ENCODE measurements at regions of chr1 and their contacts with region 1.

Region 1: DNA sequence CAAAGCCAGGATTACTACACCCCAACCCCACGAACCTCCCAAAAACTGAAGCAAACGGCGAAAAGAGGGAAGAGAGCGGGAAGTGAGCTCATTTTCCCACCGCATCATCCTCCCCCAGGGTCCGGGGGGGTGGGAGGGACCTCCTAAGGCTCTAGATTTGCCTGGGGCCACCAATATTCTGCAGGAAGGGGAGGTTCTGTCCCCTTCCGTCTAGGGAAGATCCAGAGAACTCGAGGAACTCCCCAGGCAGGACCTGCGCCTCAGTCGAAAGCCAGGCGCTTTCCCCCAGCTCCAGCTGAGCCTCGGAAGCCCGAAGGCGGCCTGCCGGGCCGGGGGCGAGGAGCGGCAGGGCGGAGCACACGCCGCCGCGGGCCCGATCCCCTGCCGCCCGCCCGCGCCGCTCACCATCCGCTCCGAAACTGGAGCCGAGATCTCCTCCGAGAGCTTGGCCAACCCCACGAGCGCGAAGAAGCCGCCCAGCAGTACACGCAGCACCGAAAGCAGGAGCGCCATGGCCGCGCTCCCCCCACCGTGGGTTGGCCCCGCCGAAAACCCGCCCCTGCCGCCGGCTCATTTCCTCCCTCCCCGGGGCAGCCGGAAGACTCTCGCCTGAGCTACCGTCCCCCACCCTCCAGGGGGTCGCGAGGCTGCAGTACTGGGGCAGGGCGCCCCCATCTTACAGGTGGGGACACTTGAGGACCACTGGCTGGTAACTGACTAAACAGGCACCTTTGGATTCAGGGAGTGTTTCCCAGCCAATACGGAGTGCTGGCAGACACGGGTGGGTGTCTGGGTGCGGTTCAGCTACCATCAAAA is at the start of gene TMEM35B:
- DNase-seq: peak in 1 of 2 donors; percentile 81
- H3K4me3 ChIP-seq: peak within 1 kb of the TSS; percentile 70 to 92
- H3K27ac ChIP-seq: peak within 1 kb of the TSS; percentile 95 to 96
- H3K4me1 ChIP-seq: peaks cover 8 to 15% of the 10 kb centered on the region in 2 donors
- H3K27me3 ChIP-seq: no peaks in the 10 kb centered on the region
- CTCF ChIP-seq: peak in 1 of 3 experiments; percentile 5
- total RNA-seq, gene TMEM35B: 16.1 TPM

Region 2: GRCh38 chr1:34946211-34946610 is 38.8 kb before region 1 on chr1:
- intact Hi-C with region 1: no loop called
- DNase-seq: no peak
- H3K4me3 ChIP-seq: no peak overlapping the region
- H3K27ac ChIP-seq: no peak overlapping the region
- H3K4me1 ChIP-seq: no peaks in the 10 kb centered on the region
- H3K27me3 ChIP-seq: no peaks in the 10 kb centered on the region
- CTCF ChIP-seq: no peak

Region 3: DNA sequence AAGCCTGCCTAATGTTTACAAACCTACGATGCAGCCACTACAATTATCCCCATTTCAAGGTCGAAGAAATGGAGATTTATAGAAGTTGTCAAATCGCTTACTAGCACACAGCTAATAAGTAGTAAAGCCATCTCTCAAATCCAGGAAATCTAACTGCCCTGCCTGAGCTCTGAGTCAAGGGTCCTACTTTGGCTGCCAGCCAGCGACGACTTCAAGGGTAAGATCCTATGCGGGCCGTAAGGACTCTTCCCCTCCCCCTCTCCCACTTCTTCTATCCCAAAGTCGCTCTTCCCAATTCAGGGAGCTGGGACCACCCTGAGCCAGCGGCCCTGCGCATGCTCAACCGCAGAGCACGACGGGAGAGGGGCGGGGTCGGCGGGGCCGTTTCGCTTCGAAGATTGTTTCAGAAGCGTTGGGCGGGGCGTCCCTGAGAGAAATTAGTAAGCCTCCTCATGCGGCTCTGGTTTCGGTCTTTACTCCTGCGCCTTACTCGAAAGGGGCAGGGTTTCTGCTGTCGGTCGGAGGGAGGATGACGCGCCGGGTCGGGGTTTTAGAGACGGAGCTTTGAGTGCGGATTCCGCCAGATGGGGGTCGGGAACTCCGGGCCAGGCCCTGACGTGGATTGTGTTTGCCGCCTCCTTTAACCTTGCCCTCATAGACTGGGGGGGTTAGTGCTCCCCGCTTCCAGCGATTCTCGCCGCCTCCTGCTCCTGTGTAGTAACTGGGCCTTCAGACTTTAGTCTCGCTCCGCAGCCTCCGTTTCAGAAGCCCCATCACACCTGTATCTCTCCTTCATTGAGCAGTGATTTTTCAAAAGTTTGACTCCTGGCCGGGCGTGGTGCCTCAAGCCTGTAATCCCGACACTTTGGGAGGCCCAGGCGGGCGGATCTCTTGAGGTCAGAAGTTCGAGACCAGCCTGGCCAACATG is 94.3 kb after region 1 on chr1 and contains the start of gene ZMYM1:
- intact Hi-C with region 1: loop called (anchors 1 kb)
- DNase-seq: peak; percentile 19 to 89
- H3K4me3 ChIP-seq: peak within 1 kb of the TSS; percentile 74 to 77
- H3K27ac ChIP-seq: peak within 1 kb of the TSS; percentile 85 to 94
- H3K4me1 ChIP-seq: peaks cover 0 to 5% of the 10 kb centered on the region in 2 donors
- H3K27me3 ChIP-seq: no peaks in the 10 kb centered on the region
- CTCF ChIP-seq: no peak
- total RNA-seq, gene ZMYM1: 4.6 TPM

Measured in ascending aorta (tissue), 2 donors.